GM10248 (cell line): ENCODE measurements at regions of chr3 and their contacts with region 1.

Region 1: DNA sequence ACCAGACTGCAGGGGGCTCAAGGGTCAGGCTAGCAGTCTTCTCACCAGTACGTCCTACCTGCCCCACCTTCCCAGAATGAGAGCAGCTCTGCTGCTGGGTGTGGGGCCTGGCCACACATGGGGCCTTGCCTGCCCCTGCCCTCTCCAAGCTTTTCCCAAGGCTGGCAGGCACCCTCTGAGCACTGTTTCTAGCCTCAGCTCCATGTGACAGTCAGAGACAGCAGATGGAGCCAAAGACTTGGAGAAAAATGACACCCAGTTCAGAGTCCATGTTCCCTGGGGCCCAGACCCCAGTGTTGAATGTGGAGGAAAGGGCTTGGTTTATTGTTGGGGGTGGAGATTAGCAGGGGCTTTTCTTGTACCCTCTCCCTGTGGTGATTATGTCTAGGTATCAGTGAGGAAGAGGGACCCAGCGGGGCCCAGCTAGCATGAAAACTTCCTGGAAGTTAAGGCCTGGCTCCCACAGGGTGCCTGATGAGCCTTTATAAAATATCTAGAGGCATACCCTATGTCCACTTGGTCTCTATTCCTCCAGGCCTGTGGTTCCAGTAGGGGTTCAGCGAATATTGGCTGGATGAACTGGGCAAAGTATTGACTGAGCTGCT is 153.8 kb downstream of the EEFSEC start:
- DNase-seq: no peak
- CTCF ChIP-seq: peak; percentile 5

Region 2: DNA sequence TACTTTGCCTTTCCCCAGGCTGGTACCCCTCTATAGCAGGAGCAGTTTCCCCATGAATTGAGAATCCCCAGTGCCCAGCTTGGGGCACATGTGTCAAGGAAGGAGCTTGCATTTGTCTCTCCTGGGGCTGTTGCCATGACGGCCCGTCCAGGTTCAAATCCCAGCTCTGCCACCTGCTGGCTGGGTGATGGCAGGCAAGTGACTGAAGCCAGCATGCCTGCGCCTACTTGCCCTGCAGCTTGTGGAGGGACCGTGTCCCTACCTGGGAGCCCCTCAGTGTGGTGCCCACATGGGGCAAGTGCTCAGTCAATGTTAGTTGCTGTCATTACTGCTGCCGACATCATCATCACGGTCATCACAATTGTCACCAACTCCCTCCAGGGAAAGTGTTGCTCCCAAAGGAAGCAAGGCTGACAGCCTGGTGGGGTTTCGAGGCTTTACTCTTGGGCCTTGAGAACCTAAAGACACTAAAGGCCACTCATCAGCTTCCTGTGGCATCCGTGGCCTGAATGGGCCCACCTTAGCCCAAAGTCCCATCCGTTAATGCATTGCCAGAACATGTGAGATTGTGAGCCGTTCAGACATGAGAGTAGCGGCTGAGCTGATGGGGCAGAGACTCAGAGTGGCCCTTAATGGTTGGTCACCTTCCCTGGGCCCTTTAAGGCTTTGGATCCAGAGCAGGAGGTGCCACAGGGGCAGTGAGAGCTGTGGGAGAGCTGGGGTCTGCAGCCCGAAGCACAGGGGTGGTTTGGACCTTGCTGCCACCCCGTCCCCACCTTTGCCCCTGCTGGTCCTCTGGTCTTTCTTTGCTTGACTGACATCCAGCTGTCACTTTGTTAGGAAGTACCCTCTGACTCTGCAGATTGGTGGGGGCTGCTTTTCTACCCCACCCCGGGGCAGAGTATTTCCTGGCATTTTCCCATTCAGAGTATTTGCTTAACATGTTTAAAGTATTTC is 15.2 kb after region 1 on chr3:
- CTCF ChIA-PET with region 1: interaction called, 31 read pairs
- POLR2A ChIA-PET with region 1: no interaction called
- DNase-seq: peak; percentile 40
- CTCF ChIP-seq: peak; percentile 50